Right ventricle myocardium superior (tissue), 1 donor: ENCODE measurements at regions of chr4 and their contacts with region 1.

Region 1: GRCh38 chr4:182938205-182938645 is 21.0 kb upstream of the DCTD start:
- DNase-seq: peak; percentile 81
- ATAC-seq: peak; percentile 100

Region 2: DNA sequence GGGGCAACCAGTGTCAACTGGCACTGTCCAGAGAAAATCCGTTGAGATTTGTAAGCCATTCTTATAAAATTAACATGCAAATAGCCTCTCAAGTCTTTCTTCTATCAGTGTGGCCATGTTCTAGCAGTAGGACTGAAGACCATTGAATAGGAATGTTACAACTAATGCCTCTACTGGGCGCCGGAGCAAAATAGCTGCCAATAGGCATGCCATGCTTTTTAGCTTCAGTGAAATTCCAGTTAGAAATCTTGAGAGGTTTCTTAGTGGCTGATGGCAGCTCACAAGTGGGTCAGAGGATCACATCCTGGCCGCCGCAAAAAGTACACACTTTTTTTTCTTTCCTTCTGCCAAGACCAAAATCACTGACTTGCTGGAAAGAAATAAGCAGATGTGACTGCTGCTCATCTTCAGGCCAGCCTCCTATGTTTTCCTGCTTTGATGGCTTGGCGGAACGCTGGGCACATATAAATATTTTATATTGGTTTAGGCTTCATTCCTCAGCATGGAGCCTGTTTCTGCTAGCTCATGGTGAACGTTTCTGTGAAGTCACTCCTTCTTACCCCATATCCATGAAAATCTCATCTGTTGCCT is 401.9 kb before region 1 on chr4:
- intact Hi-C with region 1: no loop called
- DNase-seq: no peak
- ATAC-seq: peak; percentile 70

Region 3: DNA sequence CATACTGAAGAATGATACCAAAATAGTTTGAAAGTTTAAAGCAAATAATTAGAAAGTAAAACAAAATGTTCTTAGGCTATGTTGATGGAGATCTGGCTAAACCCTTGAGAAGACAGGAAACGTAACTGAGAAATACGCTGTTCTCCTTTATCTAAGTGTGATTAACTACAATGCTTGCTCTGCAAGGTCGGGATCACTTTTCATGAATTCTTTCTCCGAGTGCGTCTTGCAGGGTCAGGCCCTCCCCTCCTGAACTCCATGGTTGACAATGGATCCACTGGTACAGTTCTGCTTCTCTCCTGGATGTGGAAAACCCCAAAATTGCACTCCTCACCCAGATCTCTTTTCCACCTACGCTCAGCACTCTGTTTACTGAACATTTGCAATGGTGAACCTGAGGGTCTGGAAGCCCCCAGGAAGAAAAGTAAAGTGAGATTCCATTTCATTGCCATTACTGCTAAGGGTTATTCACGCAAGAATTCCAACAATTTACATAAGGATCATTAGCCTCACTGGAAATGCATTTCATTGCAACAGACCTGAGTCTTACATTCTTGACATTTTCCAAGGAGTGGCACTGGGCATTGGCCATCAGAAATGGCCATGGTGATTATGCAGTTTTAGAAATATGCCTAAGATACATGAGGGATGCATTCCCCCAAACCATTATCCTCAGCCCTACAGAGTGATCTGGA is 136.2 kb after region 1 on chr4:
- intact Hi-C with region 1: loop called (anchors 10 kb)
- DNase-seq: no peak
- ATAC-seq: no peak

Region 4: GRCh38 chr4:183261953-183262775 is 323.9 kb after region 1 on chr4:
- intact Hi-C with region 1: loop called (anchors 5 kb)
- DNase-seq: peak; percentile 84
- ATAC-seq: peak; percentile 98